CD8-positive, alpha-beta T cell (primary cell): ENCODE measurements at regions of chr6 and their contacts with region 1.

Region 1: DNA sequence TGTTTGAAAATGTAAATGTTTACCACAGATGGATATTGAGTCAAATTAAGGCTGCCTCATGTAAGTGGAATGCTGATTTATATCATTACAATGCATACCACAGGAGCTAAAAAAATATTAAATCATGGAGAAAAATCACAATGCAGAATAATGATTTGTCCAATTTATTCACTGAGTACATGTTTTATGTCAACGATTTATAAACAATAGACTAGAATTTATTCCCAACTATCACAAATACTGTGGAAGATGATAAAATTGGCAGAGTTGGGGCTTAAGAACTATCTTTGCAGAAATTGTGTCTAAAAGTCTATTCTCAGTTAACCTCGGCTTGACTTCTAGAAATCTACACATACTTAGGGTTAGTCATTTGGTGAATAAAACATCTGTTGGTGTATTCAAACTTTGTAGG is 472.1 kb upstream of the MARCKS start:
- DNase-seq: no peak
- ATAC-seq: no peak
- H3K4me3 ChIP-seq: no peak overlapping the region
- H3K4me3 Mint-ChIP-seq: no peak overlapping the region
- H3K27ac ChIP-seq: no peak overlapping the region
- H3K27ac Mint-ChIP-seq: no peak overlapping the region
- H3K4me1 ChIP-seq: no peaks in the 10 kb centered on the region
- H3K4me1 Mint-ChIP-seq: no peaks in the 10 kb centered on the region
- H3K27me3 ChIP-seq: no peaks in the 10 kb centered on the region
- H3K27me3 Mint-ChIP-seq: no peaks in the 10 kb centered on the region
- CTCF ChIP-seq: no peak

Region 2: DNA sequence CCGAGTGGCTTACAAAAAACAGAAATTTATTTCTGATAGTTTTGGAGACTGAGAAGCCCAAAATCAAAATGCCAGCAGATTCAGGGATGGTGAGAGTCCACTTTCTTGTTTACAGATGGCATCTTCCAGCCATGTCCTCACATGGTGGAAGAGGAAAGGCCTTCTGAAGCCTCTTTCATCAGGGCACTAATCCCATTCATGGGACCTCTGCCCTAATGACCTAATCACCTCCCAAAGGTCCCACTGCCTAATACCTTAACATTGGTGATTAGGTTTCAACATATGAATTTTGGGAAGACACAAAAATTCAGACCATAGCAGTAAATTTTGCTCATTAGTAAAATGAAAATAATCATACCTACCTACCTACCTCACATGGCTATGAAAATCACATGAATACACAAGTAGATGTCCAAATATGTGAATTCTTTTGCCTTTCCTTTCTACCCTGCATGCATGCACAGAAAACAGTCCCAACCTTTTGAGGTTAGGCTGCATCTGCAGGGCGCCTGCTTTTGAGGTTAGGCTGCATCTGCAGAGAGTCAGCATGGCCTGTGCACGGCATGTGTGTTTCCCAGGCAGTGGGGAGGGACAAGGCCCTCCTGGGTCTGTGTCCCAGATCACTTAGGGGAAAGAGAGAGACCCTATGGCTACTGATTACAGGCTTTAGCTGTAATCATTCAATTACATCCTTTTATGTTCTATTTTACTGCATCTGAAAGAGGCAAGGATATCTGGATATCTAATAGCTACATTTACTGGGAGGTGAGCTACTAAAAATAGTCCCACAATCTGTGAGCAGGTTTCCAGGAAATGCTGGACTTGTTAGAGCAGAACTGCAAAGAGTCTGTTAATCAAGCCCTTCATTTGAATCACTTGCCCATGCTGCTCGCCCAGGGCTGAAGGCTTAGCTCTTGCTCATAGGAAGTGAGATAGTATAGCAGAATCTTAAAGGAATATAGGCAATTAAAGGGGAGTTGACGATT is 25.6 kb before region 1 on chr6:
- CTCF ChIA-PET with region 1: no interaction called
- POLR2A ChIA-PET with region 1: no interaction called
- intact Hi-C with region 1: no loop called
- DNase-seq: no peak
- ATAC-seq: no peak
- H3K4me3 ChIP-seq: no peak overlapping the region
- H3K4me3 Mint-ChIP-seq: no peak overlapping the region
- H3K27ac ChIP-seq: no peak overlapping the region
- H3K27ac Mint-ChIP-seq: no peak overlapping the region
- H3K4me1 ChIP-seq: no peaks in the 10 kb centered on the region
- H3K4me1 Mint-ChIP-seq: no peaks in the 10 kb centered on the region
- H3K27me3 ChIP-seq: no peaks in the 10 kb centered on the region
- H3K27me3 Mint-ChIP-seq: no peaks in the 10 kb centered on the region
- CTCF ChIP-seq: no peak

Region 3: DNA sequence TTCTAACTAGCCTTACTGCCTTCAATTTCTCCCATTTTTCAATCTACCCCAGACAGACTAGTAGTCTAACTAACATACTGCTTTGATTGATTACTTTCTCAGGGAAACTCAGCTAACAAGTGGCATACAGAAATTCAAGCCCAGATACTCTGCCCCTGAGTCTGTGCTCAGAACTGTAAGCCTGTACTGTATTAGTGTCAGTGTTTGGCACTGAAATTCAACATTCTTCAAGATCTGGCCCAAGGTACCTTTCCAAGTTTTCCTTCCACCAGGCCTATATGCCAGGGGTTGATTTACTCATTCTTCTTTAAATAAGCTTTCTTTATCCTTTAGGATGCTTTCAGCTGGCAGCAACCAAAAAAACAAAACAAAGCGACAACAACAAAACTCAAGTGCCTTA is 38.9 kb after region 1 on chr6:
- CTCF ChIA-PET with region 1: no interaction called
- POLR2A ChIA-PET with region 1: no interaction called
- intact Hi-C with region 1: loop called in 1 of 2 experiments (anchors 1 kb)
- DNase-seq: no peak
- ATAC-seq: no peak
- H3K4me3 ChIP-seq: no peak overlapping the region
- H3K4me3 Mint-ChIP-seq: no peak overlapping the region
- H3K27ac ChIP-seq: no peak overlapping the region
- H3K27ac Mint-ChIP-seq: no peak overlapping the region
- H3K4me1 ChIP-seq: no peaks in the 10 kb centered on the region
- H3K4me1 Mint-ChIP-seq: no peaks in the 10 kb centered on the region
- H3K27me3 ChIP-seq: no peaks in the 10 kb centered on the region
- H3K27me3 Mint-ChIP-seq: peaks cover 2% of the 10 kb centered on the region
- CTCF ChIP-seq: no peak